ENCODE measurements at regions of chr15 and their contacts with region 1.

Region 1: DNA sequence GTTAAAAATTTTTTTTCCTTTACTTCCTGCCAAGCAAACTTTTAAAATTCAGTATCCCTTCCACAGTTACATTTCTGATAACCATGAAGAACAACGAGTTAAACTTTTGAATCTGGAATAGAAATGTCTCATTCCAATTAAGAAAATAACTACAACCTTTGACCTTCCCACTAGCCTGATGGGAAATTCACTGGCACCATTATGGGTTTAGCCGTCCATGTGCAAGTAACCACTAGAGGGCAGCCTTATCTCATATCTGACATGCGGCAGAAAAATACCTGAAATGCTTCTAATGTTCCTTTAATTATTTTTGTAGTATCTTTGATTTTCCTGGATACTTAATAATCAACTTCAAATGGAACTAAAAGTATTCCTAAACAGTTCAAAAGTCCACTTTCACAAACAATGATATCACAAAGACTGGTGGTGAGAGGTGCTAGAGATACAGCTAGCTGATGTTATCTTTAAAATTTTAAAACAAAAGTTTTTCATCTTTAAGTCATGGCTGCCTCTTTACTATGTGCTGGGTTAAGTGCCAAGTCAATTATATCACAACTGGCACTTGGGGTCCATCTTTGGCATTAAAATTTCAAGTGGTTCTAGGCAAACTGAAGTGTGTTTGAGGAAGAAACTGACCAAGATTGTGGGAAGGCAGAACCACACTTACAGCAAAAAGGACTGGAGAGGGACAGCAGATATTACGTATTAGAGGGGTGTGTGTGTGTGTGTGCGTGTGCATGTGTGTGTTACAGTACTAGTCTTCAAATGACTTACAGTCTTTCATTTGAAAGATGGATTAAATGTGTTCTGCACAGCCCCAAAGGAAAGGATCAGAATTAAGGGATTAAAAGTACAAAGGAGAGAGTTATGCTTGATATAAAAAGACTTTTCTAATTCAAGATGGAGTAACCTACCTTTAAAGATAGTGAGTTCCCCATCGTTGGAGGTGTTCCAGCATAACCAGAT is 107.1 kb upstream of the ICE2 start:
- DNase-seq: peak; percentile 51
- H3K4me3 Mint-ChIP-seq: peak overlapping the region; percentile 74
- H3K27ac Mint-ChIP-seq: peak overlapping the region; percentile 92
- H3K4me1 Mint-ChIP-seq: peaks cover 91% of the 10 kb centered on the region
- H3K27me3 Mint-ChIP-seq: no peaks in the 10 kb centered on the region

Region 2: GRCh38 chr15:58933281-58934113 is 1652.5 kb before region 1 on chr15 and contains the start of gene SLTM:
- intact Hi-C with region 1: loop called (anchors 5 kb)
- DNase-seq: peak; percentile 88
- H3K4me3 Mint-ChIP-seq: peak within 1 kb of the TSS; percentile 98
- H3K27ac Mint-ChIP-seq: peak within 1 kb of the TSS; percentile 100
- H3K4me1 Mint-ChIP-seq: peaks cover 34% of the 10 kb centered on the region
- H3K27me3 Mint-ChIP-seq: no peaks in the 10 kb centered on the region
- total RNA-seq, gene SLTM: 142 and 143 TPM in 2 replicates

Region 3: DNA sequence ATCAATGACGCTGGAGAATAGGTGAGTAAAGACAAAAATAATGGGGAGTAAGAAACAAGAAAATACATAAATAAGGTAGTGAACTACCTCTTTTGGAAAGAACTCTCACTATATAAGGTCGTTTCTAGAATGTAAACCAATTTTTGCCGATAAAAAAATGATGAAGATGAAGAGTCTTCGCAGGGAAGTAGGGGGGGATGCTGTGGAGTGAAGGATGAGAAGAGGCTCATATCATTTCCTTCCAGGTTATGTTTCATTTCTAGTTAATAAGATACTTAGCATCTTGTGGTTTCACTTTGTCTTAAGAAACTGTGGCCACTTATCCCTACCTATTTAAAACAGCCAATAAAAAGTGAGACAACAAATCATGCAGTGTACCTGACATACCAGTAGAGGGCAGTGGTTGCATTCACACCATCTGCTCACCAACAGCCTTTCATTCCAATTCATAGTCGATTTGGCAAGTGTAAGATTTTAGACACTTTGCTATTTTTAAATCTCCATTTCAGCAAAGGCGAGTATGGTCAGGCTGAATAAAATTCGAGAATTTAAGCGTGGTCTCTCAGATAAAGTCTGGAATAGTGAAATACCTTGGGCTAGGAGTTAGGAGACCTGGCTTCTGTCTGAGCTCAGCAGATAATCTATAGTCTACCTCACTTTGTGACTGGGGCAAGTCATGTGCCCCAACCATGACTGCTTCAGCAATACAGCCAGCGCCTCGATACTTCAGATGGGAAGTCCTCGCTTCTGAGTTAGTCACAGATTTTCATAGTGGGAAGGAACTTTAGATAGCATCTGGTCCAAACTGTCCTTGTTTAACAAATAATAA is 78.2 kb before region 1 on chr15:
- intact Hi-C with region 1: loop called (anchors 1 kb)
- DNase-seq: peak; percentile 51
- H3K4me3 Mint-ChIP-seq: no peak overlapping the region
- H3K27ac Mint-ChIP-seq: peak overlapping the region; percentile 65
- H3K4me1 Mint-ChIP-seq: peaks cover 58% of the 10 kb centered on the region
- H3K27me3 Mint-ChIP-seq: no peaks in the 10 kb centered on the region

Region 4: GRCh38 chr15:60557191-60557618 is 28.8 kb before region 1 on chr15:
- intact Hi-C with region 1: loop called (anchors 1 kb)
- DNase-seq: no peak
- H3K4me3 Mint-ChIP-seq: peak overlapping the region; percentile 28
- H3K27ac Mint-ChIP-seq: peak overlapping the region; percentile 85
- H3K4me1 Mint-ChIP-seq: peaks cover 67% of the 10 kb centered on the region
- H3K27me3 Mint-ChIP-seq: no peaks in the 10 kb centered on the region

Region 5: DNA sequence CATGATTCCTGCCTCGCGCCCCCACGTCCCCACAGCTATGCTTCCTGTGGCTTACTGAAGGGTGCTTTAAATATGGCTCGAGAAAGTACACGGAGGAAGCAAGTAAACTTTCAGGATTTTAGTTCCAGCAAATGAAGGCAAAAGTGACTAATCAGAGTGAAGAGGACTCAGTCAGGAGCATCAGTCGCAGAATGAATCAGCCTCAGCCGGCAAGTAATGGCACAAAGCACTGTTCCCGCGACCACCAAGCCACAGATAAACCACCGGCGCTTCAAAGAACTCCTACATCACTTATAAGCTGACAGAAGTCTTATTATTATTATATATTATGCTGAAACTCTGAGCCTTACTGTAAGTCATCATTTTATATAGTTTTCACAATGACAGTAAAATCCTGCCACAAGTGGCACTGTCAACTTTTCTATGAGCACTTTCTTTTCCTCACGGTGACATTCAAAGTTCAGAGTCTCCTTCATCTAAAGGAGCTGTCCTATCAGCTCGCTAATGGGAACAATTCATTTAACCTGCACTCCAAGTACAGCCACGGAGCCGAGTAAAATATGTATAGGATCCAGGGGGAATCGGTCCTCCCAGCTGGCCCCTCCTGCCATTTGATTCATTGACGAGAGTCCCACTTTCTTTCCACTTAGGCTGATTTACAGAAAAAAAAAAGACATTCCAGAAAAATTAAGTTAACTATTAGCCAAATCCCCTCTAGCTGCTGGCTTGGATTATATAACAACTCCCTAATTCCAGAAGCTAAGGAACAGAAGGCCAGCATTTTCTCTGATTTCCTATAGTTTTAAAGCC is 109.9 kb after region 1 on chr15:
- intact Hi-C with region 1: loop called (anchors 1 kb)
- DNase-seq: peak; percentile 48
- H3K4me3 Mint-ChIP-seq: peak overlapping the region; percentile 32
- H3K27ac Mint-ChIP-seq: peak overlapping the region; percentile 75
- H3K4me1 Mint-ChIP-seq: peaks cover 66% of the 10 kb centered on the region
- H3K27me3 Mint-ChIP-seq: no peaks in the 10 kb centered on the region

Region 6: GRCh38 chr15:60899322-60899966 is 313.4 kb after region 1 on chr15:
- intact Hi-C with region 1: loop called (anchors 1 kb)
- DNase-seq: peak; percentile 43
- H3K4me3 Mint-ChIP-seq: peak overlapping the region; percentile 40
- H3K27ac Mint-ChIP-seq: peak overlapping the region; percentile 88
- H3K4me1 Mint-ChIP-seq: peaks cover 70% of the 10 kb centered on the region
- H3K27me3 Mint-ChIP-seq: no peaks in the 10 kb centered on the region

Region 7: DNA sequence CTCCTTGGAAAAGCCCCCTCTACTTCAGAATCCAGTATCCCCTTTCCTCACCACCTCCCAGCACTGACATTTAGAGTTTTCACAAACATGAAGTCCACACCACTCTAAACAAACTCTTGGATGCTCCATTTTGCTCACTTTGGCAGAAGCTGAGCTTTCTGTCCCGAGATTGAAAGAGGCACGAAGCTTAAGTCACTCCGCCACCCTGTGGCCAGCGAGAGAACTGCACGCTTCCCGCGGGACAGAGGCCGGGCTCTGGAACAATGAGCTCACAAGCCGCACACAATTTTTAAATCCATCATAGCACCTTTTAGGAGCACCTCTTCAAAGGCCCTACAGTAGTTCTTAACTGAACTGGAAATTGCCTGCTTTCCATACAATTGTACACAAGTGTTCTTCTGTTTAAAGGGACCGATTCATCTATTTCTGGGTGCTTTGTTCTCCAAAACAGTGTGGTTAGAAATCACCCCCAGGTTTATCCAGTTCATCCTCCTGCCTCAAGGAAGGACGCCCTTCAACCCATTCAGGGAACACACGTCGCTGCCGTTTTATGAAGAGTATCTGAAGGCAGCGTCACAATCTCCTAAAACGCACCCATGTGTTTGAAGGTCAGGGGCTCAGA is 1248.2 kb after region 1 on chr15:
- intact Hi-C with region 1: loop called (anchors 2 kb)
- DNase-seq: peak; percentile 59
- H3K4me3 Mint-ChIP-seq: no peak overlapping the region
- H3K27ac Mint-ChIP-seq: no peak overlapping the region
- H3K4me1 Mint-ChIP-seq: peaks cover 7% of the 10 kb centered on the region
- H3K27me3 Mint-ChIP-seq: peaks cover 16% of the 10 kb centered on the region

Measured in activated T-helper 1 cell treated with anti-CD3 and anti-CD28 coated beads, Interleukin-12 subunit alpha, Interleukin-12 subunit beta, Interleukin-2, Interleukin-4 antibody, amounts not matched to agents 30 ng/mL and 10 ng/mL and 1 ng/mL, durations not matched to agents 14 hours and 24 hours and 36 hours (primary cell).